PC-9 (cell line): ENCODE measurements at regions of chr11 and their contacts with region 1.

Region 1: DNA sequence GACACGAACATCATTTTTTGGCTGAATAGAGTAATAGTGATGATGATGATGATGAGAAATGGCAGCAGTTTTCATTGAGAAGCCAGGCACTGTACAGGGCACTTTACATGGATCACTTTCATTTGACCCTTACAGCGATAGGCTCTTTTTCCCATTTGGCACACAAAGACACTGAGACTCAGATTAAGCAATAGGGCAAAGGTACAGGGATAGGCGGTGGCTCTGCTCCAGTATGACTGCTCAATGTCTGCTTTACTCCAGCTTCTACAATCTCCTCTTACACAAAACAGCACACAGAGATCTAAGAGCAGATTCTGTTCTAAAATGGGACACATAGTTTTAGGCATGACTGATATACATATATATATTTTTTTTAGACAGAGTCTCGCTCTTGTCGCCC is 40.6 kb downstream of the MPPED2 start:
- DNase-seq: no peak
- H3K4me3 ChIP-seq: no peak overlapping the region
- H3K27ac ChIP-seq: no peak overlapping the region
- H3K4me1 ChIP-seq: no peaks in the 10 kb centered on the region
- H3K27me3 ChIP-seq: no peaks in the 10 kb centered on the region
- CTCF ChIP-seq: no peak

Region 2: DNA sequence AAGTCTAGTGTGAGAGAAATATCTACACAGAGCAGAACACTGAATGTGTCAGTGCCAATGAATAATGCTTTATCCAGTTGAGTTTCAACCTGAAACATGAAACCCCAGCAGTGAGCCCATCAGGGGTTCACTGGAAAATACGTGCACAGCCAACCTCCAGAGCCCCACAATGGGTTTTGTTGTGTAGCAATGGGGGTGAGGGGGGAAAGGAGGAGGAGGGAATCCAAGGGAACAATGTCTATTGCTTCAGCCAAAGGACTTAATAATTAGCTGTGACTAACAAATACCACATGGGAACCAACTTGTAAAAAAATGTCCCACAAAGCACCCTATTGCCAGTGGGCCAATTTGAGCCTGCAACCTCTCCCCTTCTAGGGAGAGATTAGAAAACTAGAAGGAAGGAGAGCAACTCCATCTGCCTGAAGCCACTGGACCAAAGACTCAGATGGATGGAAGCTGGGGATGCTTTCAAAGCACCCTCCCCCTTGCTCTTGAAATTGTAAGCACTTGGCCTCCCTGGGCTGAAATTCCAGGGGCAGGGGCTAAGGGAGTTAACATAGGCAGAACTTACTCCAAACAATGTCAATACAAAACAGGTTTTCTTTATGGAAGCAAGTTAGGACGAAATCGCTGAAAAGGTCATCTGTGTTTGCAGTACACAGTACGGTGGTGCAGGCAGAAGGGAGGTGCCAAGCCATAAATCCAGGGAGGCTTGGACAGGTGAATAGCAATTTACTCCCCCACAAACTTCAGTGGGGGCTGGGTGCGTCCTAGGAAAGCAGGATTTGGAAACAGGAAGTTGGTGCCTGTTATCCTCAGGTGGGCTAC is 122.8 kb before region 1 on chr11:
- CTCF ChIA-PET with region 1: no interaction called
- POLR2A ChIA-PET with region 1: interaction called, 13 read pairs
- intact Hi-C with region 1: no loop called
- DNase-seq: no peak
- H3K4me3 ChIP-seq: no peak overlapping the region
- H3K27ac ChIP-seq: no peak overlapping the region
- H3K4me1 ChIP-seq: no peaks in the 10 kb centered on the region
- H3K27me3 ChIP-seq: peaks cover 74% of the 10 kb centered on the region
- CTCF ChIP-seq: no peak

Region 3: GRCh38 chr11:30560206-30561106 is 14.9 kb after region 1 on chr11:
- CTCF ChIA-PET with region 1: no interaction called
- POLR2A ChIA-PET with region 1: no interaction called
- intact Hi-C with region 1: no loop called
- DNase-seq: no peak
- H3K4me3 ChIP-seq: no peak overlapping the region
- H3K27ac ChIP-seq: no peak overlapping the region
- H3K4me1 ChIP-seq: no peaks in the 10 kb centered on the region
- H3K27me3 ChIP-seq: no peaks in the 10 kb centered on the region
- CTCF ChIP-seq: no peak

Region 4: DNA sequence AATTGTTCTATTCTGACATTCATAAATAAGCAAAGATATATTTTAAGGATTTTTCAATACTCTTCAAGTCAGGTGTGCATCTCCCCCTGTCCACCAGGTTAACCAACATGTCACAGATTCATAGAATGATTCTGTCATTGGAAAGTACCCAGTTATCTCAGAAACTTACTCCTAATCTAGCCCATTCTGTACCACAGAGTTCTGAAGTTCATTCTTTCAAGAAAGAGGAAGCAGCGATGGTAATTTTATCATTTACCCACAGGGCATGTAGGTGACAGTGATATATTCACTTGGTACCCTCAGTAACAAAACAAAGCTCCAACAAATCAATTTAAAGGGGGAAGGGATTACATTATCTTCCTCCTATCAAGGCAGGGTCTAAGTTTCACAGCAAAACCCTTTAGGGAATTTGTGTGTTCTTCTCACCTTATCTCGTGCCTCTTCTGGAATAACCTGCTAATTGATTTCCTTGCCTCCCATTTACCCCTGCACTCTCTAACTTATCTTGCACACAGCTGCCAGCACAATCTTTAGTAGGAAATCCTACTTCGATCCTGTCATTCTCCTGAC is 59.6 kb after region 1 on chr11:
- CTCF ChIA-PET with region 1: no interaction called
- POLR2A ChIA-PET with region 1: no interaction called
- intact Hi-C with region 1: no loop called
- DNase-seq: no peak
- H3K4me3 ChIP-seq: no peak overlapping the region
- H3K27ac ChIP-seq: no peak overlapping the region
- H3K4me1 ChIP-seq: no peaks in the 10 kb centered on the region
- H3K27me3 ChIP-seq: no peaks in the 10 kb centered on the region
- CTCF ChIP-seq: no peak